ENCODE measurements at regions of chr9 and their contacts with region 1.

Region 1: DNA sequence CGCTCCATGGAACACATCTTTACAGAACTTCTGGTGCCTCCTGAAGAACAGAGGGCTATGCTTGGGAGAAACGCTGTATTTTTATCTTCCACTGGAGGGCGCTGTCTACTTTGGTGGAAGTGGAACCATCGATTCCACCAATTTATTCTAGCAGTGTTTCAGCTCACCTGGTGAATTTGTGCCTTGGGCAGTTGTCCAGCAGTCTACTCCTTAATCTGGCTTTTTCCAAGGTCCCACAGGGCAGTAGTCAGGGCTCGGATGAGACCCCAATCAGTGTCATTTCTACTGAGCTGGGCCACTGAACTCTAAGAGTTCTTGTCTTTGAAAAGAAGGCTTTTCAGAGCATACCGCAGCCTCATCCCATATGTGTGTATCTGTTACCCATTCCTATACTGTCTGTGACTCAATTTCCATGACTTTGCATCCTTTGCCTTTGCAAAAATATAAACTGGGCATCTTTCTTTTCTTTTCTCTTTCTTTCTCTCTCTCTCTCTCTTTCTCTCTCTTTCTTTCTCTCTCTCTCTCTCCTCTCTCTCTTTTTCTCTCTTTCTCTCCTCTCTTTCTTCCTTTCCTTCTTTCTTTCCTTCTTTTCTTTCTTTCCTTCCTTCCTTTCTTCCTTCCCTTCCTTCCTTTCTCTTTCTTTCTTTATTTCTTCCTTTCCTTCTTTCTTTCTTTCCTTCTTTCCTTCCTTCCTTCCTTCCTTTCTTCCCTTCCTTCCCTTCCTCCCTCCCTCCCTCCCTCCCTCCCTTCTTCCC is 138.4 kb upstream of the ZNF618 start:
- DNase-seq: peak; percentile 50
- H3K4me3 ChIP-seq: no peak overlapping the region; a peak in 1 of 4 replicates
- H3K27ac ChIP-seq: no peak overlapping the region
- H3K4me1 ChIP-seq: peaks cover 0 to 3% of the 10 kb centered on the region in 2 experiments; a peak in 1 of 4 replicates
- H3K27me3 ChIP-seq: no peaks in the 10 kb centered on the region
- CTCF ChIP-seq: peak; percentile 83
- EP300 ChIP-seq: no peak
- RAD21 ChIP-seq: peak; percentile 89

Region 2: GRCh38 chr9:113632776-113633590 is 104.7 kb before region 1 on chr9:
- CTCF ChIA-PET with region 1: no interaction called
- POLR2A ChIA-PET with region 1: no interaction called
- DNase-seq: no peak
- H3K4me3 ChIP-seq: no peak overlapping the region
- H3K27ac ChIP-seq: no peak overlapping the region
- H3K4me1 ChIP-seq: peaks cover 5 to 15% of the 10 kb centered on the region in 2 experiments; a peak in 2 of 4 replicates
- H3K27me3 ChIP-seq: no peaks in the 10 kb centered on the region
- CTCF ChIP-seq: no peak
- EP300 ChIP-seq: no peak
- RAD21 ChIP-seq: no peak

Region 3: GRCh38 chr9:113720495-113720894 is 17.2 kb before region 1 on chr9:
- CTCF ChIA-PET with region 1: interaction called, 10 read pairs
- POLR2A ChIA-PET with region 1: no interaction called
- DNase-seq: no peak
- H3K4me3 ChIP-seq: no peak overlapping the region
- H3K27ac ChIP-seq: no peak overlapping the region
- H3K4me1 ChIP-seq: no peaks in the 10 kb centered on the region
- H3K27me3 ChIP-seq: no peaks in the 10 kb centered on the region; the same call in 1 of the 2 replicates
- CTCF ChIP-seq: no peak
- EP300 ChIP-seq: no peak
- RAD21 ChIP-seq: no peak

Region 4: GRCh38 chr9:113753398-113754119 is 15.9 kb after region 1 on chr9:
- CTCF ChIA-PET with region 1: interaction called, 12 read pairs
- POLR2A ChIA-PET with region 1: no interaction called
- DNase-seq: no peak
- H3K4me3 ChIP-seq: no peak overlapping the region
- H3K27ac ChIP-seq: no peak overlapping the region
- H3K4me1 ChIP-seq: peaks cover 0 to 10% of the 10 kb centered on the region in 2 experiments; a peak in 1 of 4 replicates
- H3K27me3 ChIP-seq: no peaks in the 10 kb centered on the region
- CTCF ChIP-seq: no peak
- EP300 ChIP-seq: no peak
- RAD21 ChIP-seq: no peak

Region 5: DNA sequence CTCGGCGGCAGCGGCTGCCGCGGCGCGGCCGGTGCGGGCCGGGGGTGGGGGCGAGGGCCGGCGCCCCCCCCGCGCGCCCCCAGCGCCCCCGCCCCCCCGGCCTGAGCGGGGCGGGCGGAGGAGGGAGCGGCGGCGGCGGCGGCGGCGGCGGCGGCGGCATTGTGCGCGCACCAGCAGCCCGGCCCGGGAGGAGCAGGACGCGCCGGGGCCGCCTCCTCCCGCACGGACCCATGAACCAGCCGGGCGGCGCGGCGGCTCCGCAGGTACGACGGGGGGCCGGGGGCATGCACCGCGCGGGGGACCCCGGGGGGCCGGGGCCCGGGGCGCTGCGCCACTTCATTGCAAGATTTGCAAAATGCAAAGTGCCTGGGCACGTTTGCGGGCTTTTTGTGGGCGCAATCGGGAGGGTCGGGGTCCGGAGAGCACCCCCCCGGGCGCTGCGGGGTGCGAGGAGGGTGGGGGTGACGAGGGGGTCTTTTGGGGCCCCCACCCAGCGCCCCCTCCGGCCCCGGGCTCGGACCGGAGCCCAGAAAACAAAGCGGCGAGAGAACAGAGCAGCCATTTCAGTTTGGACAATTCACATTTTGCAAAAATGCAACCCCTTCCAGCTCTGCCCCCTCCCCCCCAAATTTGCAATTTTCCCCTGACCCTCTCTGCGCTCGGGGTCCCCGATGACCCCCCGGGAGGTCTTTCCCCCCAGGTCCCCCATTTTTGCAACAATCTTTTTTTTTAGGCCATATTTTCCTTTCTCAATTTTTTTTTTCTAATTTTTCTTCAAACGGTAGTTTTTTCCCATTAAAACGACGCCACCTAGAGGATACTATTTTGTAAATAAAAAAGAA is 138.7 kb after region 1 on chr9 and contains the start of gene ZNF618:
- CTCF ChIA-PET with region 1: interaction called, 11 read pairs
- POLR2A ChIA-PET with region 1: no interaction called
- DNase-seq: peak; percentile 91
- H3K4me3 ChIP-seq: peak within 1 kb of the TSS; percentile 70 to 77
- H3K27ac ChIP-seq: peak within 1 kb of the TSS; percentile 72 to 86
- H3K4me1 ChIP-seq: peaks cover 5 to 18% of the 10 kb centered on the region in 2 experiments
- H3K27me3 ChIP-seq: no peaks in the 10 kb centered on the region
- CTCF ChIP-seq: peak; percentile 51
- EP300 ChIP-seq: no peak
- RAD21 ChIP-seq: peak; percentile 17; the same call in 1 of the 2 replicates
- polyA plus RNA-seq, gene ZNF618: 5.0 and 6.2 TPM in 2 replicates

Region 6: DNA sequence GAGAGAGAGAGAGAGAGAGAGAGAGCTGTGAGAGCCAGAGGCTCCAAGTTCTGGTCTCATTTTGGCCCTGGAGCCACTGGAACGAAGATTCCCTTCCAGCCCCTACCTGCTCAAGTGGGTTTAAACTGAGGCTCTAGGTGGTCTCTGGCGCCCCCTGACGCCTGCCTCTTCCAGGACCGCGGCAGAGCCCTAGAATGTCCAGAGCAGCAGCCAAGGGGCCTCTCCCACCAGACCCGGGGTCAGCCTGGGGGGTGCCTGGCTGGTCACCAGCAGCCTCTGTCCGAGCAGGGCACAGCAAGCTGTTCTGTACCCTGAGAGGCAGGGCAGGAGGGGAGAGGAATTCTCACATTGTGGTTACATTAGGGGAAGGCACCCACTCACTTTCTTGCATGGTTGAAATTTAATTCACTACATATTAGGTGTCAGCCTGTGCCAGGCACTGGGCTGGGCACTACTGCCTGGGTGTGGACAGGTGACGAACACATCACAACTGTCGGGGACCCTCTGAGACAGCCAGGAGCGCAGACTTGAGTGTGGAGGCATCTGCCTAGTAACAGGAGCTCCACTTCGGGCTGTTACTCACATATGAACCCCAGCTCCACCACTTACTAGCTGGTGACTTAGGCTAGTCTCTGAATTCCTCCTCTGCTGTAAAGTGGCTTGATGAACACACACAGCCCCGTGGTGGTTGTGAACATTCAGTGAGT is 295.9 kb after region 1 on chr9:
- CTCF ChIA-PET with region 1: interaction called, 18 read pairs
- POLR2A ChIA-PET with region 1: no interaction called
- DNase-seq: peak; percentile 83
- H3K4me3 ChIP-seq: peak overlapping the region in 1 of 2 experiments; percentile 23; a peak in 1 of 4 replicates
- H3K27ac ChIP-seq: no peak overlapping the region
- H3K4me1 ChIP-seq: no peaks in the 10 kb centered on the region; a peak in 1 of 4 replicates
- H3K27me3 ChIP-seq: no peaks in the 10 kb centered on the region
- CTCF ChIP-seq: peak; percentile 59
- EP300 ChIP-seq: no peak
- RAD21 ChIP-seq: peak; percentile 79